Vagina (tissue), 2 donors: ENCODE measurements at regions of chrX and their contacts with region 1.

Region 1: GRCh38 chrX:155026726-155027508 is at the start of gene FUNDC2:
- DNase-seq: peak in 1 of 2 donors; percentile 94
- H3K4me3 ChIP-seq: peak within 1 kb of the TSS; percentile 52 to 59
- H3K27ac ChIP-seq: peak within 1 kb of the TSS; percentile 89
- H3K4me1 ChIP-seq: no peaks in the 10 kb centered on the region
- H3K27me3 ChIP-seq: no peaks in the 10 kb centered on the region
- CTCF ChIP-seq: no peak
- POLR2A ChIP-seq: peak in 1 of 2 donors; percentile 44
- total RNA-seq, gene FUNDC2: 53.5 TPM

Region 2: DNA sequence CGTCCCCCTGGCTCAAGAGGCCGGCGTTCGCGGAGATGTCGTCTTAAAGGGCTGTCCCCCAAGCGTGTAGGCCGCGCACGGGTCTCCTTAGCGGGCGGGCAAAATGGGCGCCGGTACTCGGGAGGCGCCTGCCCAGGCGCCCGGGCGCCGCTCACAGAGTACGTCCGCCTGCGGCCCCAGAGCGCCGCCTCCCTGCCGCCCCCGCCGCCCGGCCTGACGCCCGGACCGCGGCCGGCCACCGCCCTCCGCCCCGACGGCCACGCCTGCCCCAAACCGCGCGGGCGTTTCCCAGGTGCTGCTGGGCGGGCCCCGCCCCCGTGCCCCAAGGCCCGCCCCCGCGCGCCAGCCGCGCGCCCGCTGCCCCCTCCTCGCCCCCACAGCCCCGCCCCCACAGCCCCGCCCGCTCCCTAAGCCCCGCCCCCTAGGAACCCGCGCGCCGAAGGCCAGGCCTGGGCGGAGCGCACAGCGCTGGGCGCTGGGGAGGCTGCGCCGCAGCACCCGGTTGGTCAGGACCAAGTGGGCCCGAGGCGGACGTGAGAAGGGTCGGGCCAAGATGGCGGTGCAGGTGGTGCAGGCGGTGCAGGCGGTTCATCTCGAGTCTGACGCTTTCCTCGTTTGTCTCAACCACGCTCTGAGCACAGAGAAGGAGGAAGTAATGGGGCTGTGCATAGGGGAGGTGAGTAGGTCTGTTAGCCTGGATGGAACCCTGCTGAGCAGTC is 44.2 kb after region 1 on chrX and contains the starts of genes BRCC3, CMC4 and MTCP1:
- intact Hi-C with region 1: loop called (anchors 5 kb)
- DNase-seq: no peak
- H3K4me3 ChIP-seq: peak within 1 kb of the TSS; percentile 56 to 67
- H3K27ac ChIP-seq: peak within 1 kb of the TSS; percentile 79
- H3K4me1 ChIP-seq: peaks cover 23% of the 10 kb centered on the region
- H3K27me3 ChIP-seq: no peaks in the 10 kb centered on the region
- CTCF ChIP-seq: no peak
- POLR2A ChIP-seq: peak in 1 of 2 donors; percentile 65
- total RNA-seq, gene BRCC3: 11.5 TPM
- total RNA-seq, gene CMC4: 21.9 TPM
- total RNA-seq, gene MTCP1: 6.9 TPM